WTC11 (cell line): ENCODE measurements at regions of chr19 and their contacts with region 1.

Region 1: DNA sequence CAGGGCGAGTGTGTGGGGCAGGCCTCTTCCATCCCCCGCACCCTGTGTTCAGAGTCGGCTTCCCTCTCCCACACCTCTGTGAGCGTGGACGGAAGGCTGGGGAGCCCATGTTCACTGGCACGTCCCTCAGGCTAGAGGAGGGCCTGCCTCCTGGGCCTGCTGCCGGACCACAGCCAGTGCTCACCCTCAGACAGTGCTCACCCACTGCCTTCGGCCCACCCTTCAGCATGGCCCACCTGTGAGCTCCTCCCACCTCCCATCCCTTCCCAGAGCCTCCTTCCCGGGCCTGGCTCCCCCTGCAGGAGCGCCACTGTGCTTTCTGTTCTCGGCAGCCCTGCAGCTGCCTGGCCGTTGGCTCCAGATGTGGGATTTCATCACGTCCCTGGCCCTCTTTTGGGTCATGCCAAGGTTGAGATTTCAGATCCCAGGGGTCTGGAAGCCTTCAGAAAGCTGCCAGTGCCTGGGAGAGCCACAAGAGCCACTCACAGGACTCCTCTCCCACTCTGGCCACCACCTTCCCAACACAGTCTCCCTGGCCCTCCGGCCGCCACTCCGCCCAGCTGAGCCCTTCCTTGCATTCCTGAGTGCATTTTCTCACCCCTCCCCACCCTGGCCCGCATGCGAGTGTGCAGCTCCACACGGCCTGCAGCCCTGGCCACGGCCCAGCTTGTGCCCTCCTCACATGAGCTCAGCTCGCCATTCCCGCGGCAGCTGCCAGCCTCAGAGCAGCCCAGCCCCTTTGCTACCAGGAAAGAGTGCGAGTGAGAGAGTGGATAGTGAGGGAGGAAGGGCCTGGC is 25.3 kb downstream of the CAPN12 start:
- DNase-seq: peak; percentile 67
- ATAC-seq: peak; percentile 90
- H3K4me3 Mint-ChIP-seq: no peak overlapping the region
- H3K27ac Mint-ChIP-seq: peak overlapping the region; percentile 60; the same call in 1 of the 2 replicates
- H3K4me1 Mint-ChIP-seq: peaks cover 5% of the 10 kb centered on the region
- H3K27me3 Mint-ChIP-seq: no peaks in the 10 kb centered on the region
- CTCF ChIP-seq: no peak

Region 2: GRCh38 chr19:38618590-38619360 is 100.2 kb before region 1 on chr19 and contains the start of gene EIF3K:
- CTCF ChIA-PET with region 1: interaction called, 11 read pairs
- POLR2A ChIA-PET with region 1: no interaction called
- DNase-seq: peak; percentile 99
- ATAC-seq: peak; percentile 85
- H3K4me3 Mint-ChIP-seq: peak within 1 kb of the TSS; percentile 100
- H3K27ac Mint-ChIP-seq: peak within 1 kb of the TSS; percentile 99
- H3K4me1 Mint-ChIP-seq: peaks cover 45% of the 10 kb centered on the region
- H3K27me3 Mint-ChIP-seq: no peaks in the 10 kb centered on the region; the same call in 1 of the 2 replicates
- CTCF ChIP-seq: no peak
- total RNA-seq, gene EIF3K: 389 to 416 TPM (median 410 TPM) in 3 replicates

Region 3: DNA sequence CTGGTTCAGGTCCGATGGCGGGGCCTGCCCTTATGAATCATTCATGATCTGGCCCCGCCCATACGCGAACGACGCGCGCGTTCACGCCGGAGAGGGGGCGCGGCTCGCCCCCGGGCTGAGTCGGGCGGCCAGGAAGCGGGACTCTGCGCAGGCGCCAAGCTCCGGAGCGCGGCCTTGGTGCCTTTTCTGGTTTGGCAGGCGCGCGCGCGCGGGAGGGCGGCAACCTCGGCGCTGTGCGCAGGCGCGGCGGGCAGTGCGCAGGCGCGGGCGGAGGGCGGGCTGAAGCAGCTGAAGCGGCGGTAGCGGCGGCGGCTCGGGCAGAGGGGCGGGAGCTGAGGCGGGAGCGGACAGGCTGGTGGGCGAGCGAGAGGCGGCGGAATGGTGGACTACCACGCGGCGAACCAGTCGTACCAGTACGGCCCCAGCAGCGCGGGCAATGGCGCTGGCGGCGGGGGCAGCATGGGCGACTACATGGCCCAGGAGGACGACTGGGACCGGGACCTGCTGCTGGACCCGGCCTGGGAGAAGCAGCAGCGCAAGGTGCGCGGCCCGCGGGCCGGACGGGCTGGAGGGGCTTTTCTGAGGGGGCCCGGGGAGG is 71.5 kb before region 1 on chr19 and contains the start of gene ACTN4:
- CTCF ChIA-PET with region 1: interaction called, 13 read pairs
- POLR2A ChIA-PET with region 1: interaction called, 5 read pairs
- DNase-seq: peak; percentile 100
- ATAC-seq: peak; percentile 83
- H3K4me3 Mint-ChIP-seq: peak within 1 kb of the TSS; percentile 94
- H3K27ac Mint-ChIP-seq: peak within 1 kb of the TSS; percentile 93
- H3K4me1 Mint-ChIP-seq: peaks cover 52% of the 10 kb centered on the region
- H3K27me3 Mint-ChIP-seq: no peaks in the 10 kb centered on the region
- CTCF ChIP-seq: no peak
- total RNA-seq, gene ACTN4: 484 to 511 TPM (median 506 TPM) in 3 replicates

Region 4: DNA sequence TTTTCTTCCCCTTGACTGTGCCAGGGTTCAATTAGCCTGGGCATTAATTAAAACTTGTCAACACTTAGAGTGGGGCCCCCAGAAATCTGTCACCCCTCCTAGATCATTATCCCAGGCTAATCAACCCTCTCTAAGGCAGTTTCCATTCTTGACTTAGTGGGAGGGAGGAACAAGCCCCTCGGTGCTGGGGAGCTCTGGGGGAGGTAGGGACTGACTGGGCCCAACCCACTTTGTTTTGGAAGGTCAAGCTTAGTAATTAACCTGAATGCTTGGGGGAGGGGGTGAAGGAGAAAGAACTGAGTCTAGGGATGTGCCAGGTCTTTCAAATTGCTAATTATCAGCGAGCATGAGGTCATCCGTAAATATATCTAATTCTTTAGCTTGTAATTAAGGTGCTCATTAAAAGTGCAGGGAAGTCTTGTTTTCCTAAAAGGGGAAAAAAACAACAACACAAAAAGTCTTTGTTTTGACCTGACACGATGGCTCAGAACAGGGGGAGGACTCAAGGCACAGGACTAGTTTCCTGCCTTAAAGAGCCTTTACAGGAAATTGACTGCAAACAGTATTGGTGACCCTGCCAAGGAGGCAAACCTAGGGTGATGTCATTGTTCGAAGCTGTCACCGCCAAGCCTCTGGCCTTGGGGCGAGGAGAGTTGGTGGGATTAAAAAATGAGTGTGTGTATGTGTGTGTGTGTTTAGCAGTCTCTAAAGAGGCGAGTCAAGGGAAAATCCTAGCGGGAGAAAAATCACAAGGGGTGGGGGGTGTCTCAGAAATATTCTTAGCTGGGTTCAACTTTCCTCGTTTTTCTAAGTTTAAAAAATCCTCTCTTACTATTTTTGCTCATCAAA is 52.1 kb before region 1 on chr19:
- CTCF ChIA-PET with region 1: interaction called, 21 read pairs
- POLR2A ChIA-PET with region 1: interaction called, 3 read pairs
- DNase-seq: no peak
- ATAC-seq: peak; percentile 34
- H3K4me3 Mint-ChIP-seq: peak overlapping the region; percentile 34
- H3K27ac Mint-ChIP-seq: peak overlapping the region; percentile 100
- H3K4me1 Mint-ChIP-seq: peaks cover 98% of the 10 kb centered on the region
- H3K27me3 Mint-ChIP-seq: no peaks in the 10 kb centered on the region
- CTCF ChIP-seq: no peak

Region 5: GRCh38 chr19:38683393-38684080 is 35.4 kb before region 1 on chr19:
- CTCF ChIA-PET with region 1: interaction called, 12 read pairs
- POLR2A ChIA-PET with region 1: no interaction called
- DNase-seq: peak; percentile 81
- ATAC-seq: peak; percentile 67
- H3K4me3 Mint-ChIP-seq: peak overlapping the region; percentile 40; the same call in 1 of the 2 replicates
- H3K27ac Mint-ChIP-seq: peak overlapping the region; percentile 99
- H3K4me1 Mint-ChIP-seq: peaks cover 78% of the 10 kb centered on the region
- H3K27me3 Mint-ChIP-seq: no peaks in the 10 kb centered on the region
- CTCF ChIP-seq: no peak

Region 6: DNA sequence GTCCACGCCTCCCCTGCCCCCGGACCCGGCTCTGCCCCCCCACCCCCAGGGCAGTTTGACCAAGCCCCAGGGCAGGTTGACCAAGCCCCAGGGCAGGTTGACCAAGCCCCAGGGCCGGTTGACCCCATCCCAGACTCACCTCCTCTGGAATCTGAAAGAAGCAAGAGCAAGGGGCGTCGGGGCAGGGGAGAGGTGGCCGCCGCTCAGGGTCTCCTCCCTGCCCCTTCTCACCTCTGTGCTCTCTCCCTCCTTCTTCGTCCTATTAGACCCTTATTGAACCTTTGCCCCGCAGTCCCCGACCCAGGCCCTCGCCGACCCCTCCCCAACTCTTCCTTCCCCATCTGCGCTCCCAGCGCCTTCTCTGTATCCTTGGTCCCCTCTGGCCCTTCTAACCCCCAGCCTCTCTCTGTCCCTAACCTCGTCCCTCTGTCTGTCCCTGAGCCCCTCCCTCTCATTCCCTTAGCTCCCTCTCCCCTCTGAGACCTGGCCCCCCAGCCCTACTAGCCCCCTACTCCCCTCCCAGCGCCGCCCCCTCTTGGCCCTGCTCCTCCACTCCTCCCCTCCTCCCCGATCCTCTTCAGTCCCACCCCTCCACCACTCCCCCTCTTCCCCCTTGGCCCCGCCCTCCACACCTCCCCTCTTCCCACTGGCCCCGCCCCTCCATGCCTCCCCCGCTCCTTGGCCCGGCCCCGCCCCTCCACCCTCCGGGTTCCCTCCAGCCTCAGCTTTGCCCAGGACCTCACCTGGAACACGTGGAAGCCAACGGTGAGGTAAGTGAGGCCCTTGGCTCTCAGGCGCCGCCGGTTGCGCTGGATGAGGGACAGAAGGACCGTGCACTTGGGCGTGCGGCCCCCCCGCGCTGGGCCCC is 17.7 kb after region 1 on chr19:
- CTCF ChIA-PET with region 1: interaction called, 16 read pairs
- POLR2A ChIA-PET with region 1: no interaction called
- DNase-seq: peak; percentile 93
- ATAC-seq: peak; percentile 46
- H3K4me3 Mint-ChIP-seq: peak overlapping the region; percentile 68
- H3K27ac Mint-ChIP-seq: no peak overlapping the region
- H3K4me1 Mint-ChIP-seq: peaks cover 10% of the 10 kb centered on the region
- H3K27me3 Mint-ChIP-seq: peaks cover 23% of the 10 kb centered on the region
- CTCF ChIP-seq: no peak